Dorsolateral prefrontal cortex (tissue), 120 donors: ENCODE measurements at regions of chr18 and their contacts with region 1.

Region 1: GRCh38 chr18:5868218-5869115 is 26.9 kb downstream of the TMEM200C start:
- DNase-seq: peak; percentile 20 to 69 (median 55)
- H3K4me3 ChIP-seq: no peak overlapping the region
- H3K27ac ChIP-seq: no peak overlapping the region
- H3K27me3 ChIP-seq: peaks cover 0 to 9% (median 0%) of the 10 kb centered on the region in 45 donors
- CTCF ChIP-seq: peak; percentile 59 to 92 (median 83)

Region 2: DNA sequence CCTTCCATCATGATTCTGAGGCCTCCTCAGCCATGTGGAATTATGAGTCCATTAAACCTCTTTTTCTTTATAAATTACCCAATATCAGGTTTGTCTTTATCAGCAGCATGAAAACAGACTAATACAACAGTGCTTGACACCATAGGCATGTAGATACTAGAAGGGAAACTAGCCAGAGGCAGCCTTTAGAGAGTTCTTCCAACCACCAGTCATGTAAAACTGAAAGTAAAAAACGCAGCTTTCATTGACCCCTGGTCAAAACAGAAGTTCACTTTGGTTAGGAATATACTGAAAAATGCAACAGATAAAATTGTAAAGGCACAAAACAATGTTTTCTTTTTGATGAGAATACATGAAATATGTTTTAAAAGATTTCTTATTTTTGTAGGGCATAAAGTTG is 669.0 kb after region 1 on chr18:
- intact Hi-C with region 1: loop called in 1 of 2 experiments (anchors 5 kb)
- DNase-seq: no peak
- H3K4me3 ChIP-seq: no peak overlapping the region
- H3K27ac ChIP-seq: no peak overlapping the region
- H3K27me3 ChIP-seq: peaks cover 0 to 5% (median 0%) of the 10 kb centered on the region in 45 donors
- CTCF ChIP-seq: no peak